PC-3 (cell line): ENCODE measurements at regions of chr4 and their contacts with region 1.

Region 1: GRCh38 chr4:101347557-101348366 is 436 bp upstream of the PPP3CA start:
- DNase-seq: peak; percentile 91
- ATAC-seq: peak; percentile 65
- H3K4me3 ChIP-seq: peak overlapping the region; percentile 97
- H3K27ac ChIP-seq: peak overlapping the region; percentile 93
- H3K4me1 ChIP-seq: peaks cover 27% of the 10 kb centered on the region
- H3K27me3 ChIP-seq: no peaks in the 10 kb centered on the region
- CTCF ChIP-seq: no peak

Region 2: DNA sequence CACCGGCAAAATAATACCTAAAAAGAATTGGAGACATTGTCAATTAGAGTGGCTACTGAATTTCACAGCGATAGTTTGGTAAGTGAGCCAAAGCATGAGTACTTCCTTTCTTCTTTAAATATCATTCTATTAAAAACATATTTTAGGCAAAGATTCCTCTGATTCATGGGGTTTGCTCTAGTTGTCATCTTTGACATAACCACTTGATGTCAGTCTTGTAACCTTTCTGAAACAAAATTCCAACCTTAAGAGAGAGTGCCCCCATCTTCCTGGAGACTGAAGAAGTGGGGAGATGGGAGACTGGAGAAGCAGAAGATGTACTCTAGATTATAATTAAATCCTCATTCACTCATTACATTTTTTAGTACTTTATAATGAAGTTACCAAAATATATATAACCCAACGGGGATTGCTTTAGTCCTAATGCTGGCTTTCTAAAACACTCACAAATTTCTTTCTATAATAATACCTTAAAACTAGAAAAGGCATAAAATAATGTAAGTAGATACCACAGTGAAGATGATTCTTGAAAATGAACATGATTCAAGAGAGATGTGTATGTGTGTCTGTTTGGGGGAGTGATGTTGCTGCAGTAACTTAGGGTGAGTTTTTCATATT is 926.3 kb before region 1 on chr4:
- CTCF ChIA-PET with region 1: no interaction called
- POLR2A ChIA-PET with region 1: no interaction called
- intact Hi-C with region 1: loop called (anchors 2 kb)
- DNase-seq: peak; percentile 43
- ATAC-seq: peak; percentile 68
- H3K4me3 ChIP-seq: peak overlapping the region; percentile 42; the same call in 1 of the 2 replicates
- H3K27ac ChIP-seq: peak overlapping the region; percentile 10; the same call in 1 of the 2 replicates
- H3K4me1 ChIP-seq: peaks cover 12% of the 10 kb centered on the region; the same call in 1 of the 2 replicates
- H3K27me3 ChIP-seq: no peaks in the 10 kb centered on the region
- CTCF ChIP-seq: peak; percentile 71

Region 3: GRCh38 chr4:101187841-101188240 is 159.9 kb before region 1 on chr4:
- CTCF ChIA-PET with region 1: no interaction called
- POLR2A ChIA-PET with region 1: interaction called, 8 read pairs
- intact Hi-C with region 1: loop called (anchors 5 kb)
- DNase-seq: peak; percentile 56
- ATAC-seq: peak; percentile 56
- H3K4me3 ChIP-seq: no peak overlapping the region
- H3K27ac ChIP-seq: peak overlapping the region; percentile 23
- H3K4me1 ChIP-seq: peaks cover 22% of the 10 kb centered on the region
- H3K27me3 ChIP-seq: no peaks in the 10 kb centered on the region
- CTCF ChIP-seq: peak; percentile 63

Region 4: GRCh38 chr4:101217353-101218031 is 130.3 kb before region 1 on chr4:
- CTCF ChIA-PET with region 1: no interaction called
- POLR2A ChIA-PET with region 1: no interaction called
- intact Hi-C with region 1: no loop called
- DNase-seq: peak; percentile 12
- ATAC-seq: no peak
- H3K4me3 ChIP-seq: no peak overlapping the region
- H3K27ac ChIP-seq: no peak overlapping the region
- H3K4me1 ChIP-seq: no peaks in the 10 kb centered on the region; the same call in 1 of the 2 replicates
- H3K27me3 ChIP-seq: no peaks in the 10 kb centered on the region
- CTCF ChIP-seq: no peak

Region 5: GRCh38 chr4:101439926-101440325 is 92.2 kb after region 1 on chr4:
- CTCF ChIA-PET with region 1: no interaction called
- POLR2A ChIA-PET with region 1: no interaction called
- intact Hi-C with region 1: no loop called
- DNase-seq: no peak
- ATAC-seq: no peak
- H3K4me3 ChIP-seq: no peak overlapping the region
- H3K27ac ChIP-seq: no peak overlapping the region
- H3K4me1 ChIP-seq: no peaks in the 10 kb centered on the region
- H3K27me3 ChIP-seq: no peaks in the 10 kb centered on the region
- CTCF ChIP-seq: no peak

Region 6: DNA sequence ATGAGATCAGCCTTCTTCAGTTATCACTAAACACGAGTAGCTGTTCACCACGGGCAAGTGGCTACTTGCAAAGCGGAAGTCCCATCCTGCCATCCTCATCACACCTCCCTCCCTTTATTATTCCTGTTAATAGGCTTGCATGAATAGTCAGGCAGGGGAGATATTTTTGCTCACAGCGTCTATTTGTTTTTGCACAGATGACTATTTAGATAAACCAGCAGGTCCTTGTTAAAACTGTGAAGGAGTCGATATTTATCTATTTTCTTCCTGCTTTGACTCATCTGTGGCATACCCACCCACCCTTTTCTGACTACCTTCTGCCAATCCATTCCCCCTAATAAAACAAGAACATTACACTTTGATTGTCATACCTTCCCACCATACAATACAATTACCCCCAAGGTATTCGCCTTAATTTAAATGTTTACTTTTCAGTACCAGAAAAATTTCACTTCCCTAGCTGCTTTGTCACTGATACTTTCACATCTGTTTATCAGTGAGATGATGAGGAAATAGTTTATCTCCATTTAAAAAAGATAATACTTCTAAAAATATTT is 346.2 kb after region 1 on chr4:
- CTCF ChIA-PET with region 1: no interaction called
- POLR2A ChIA-PET with region 1: no interaction called
- intact Hi-C with region 1: loop called (anchors 5 kb)
- DNase-seq: peak; percentile 64
- ATAC-seq: peak; percentile 91
- H3K4me3 ChIP-seq: no peak overlapping the region; the same call in 1 of the 2 replicates
- H3K27ac ChIP-seq: peak overlapping the region; percentile 49
- H3K4me1 ChIP-seq: peaks cover 16% of the 10 kb centered on the region; the same call in 1 of the 2 replicates
- H3K27me3 ChIP-seq: no peaks in the 10 kb centered on the region
- CTCF ChIP-seq: no peak

Region 7: GRCh38 chr4:101790521-101791188 is 442.9 kb after region 1 on chr4 and contains the start of gene BANK1:
- CTCF ChIA-PET with region 1: no interaction called
- POLR2A ChIA-PET with region 1: interaction called, 3 read pairs
- intact Hi-C with region 1: loop called (anchors 5 kb)
- DNase-seq: peak; percentile 47
- ATAC-seq: peak; percentile 72
- H3K4me3 ChIP-seq: peak within 1 kb of the TSS; percentile 74
- H3K27ac ChIP-seq: peak within 1 kb of the TSS; percentile 56
- H3K4me1 ChIP-seq: peaks cover 16% of the 10 kb centered on the region
- H3K27me3 ChIP-seq: no peaks in the 10 kb centered on the region
- CTCF ChIP-seq: peak; percentile 45; the same call in 1 of the 2 replicates
- total RNA-seq, gene BANK1: 1.5 and 1.8 TPM in 2 replicates

Region 8: GRCh38 chr4:102255454-102255853 is 907.7 kb after region 1 on chr4:
- CTCF ChIA-PET with region 1: no interaction called
- POLR2A ChIA-PET with region 1: interaction called, 10 read pairs
- intact Hi-C with region 1: loop called (anchors 5 kb)
- DNase-seq: no peak
- ATAC-seq: no peak
- H3K4me3 ChIP-seq: no peak overlapping the region
- H3K27ac ChIP-seq: no peak overlapping the region
- H3K4me1 ChIP-seq: no peaks in the 10 kb centered on the region; the same call in 1 of the 2 replicates
- H3K27me3 ChIP-seq: no peaks in the 10 kb centered on the region
- CTCF ChIP-seq: no peak